ENCODE measurements at regions of chr7 and their contacts with region 1.

Region 1: GRCh38 chr7:6475433-6476186 is 27.9 kb upstream of the DAGLB start:
- DNase-seq: no peak
- ATAC-seq: no peak
- H3K4me3 ChIP-seq: no peak overlapping the region
- H3K4me3 Mint-ChIP-seq: no peak overlapping the region
- H3K27ac ChIP-seq: no peak overlapping the region
- H3K27ac Mint-ChIP-seq: peak overlapping the region in 7 of 9 donors; percentile 2 to 72 (median 21)
- H3K4me1 ChIP-seq: peaks cover 0 to 4% of the 10 kb centered on the region in 2 donors
- H3K4me1 Mint-ChIP-seq: peaks cover 42 to 62% (median 54%) of the 10 kb centered on the region in 7 donors
- H3K27me3 ChIP-seq: no peaks in the 10 kb centered on the region
- H3K27me3 Mint-ChIP-seq: no peaks in the 10 kb centered on the region

Region 2: DNA sequence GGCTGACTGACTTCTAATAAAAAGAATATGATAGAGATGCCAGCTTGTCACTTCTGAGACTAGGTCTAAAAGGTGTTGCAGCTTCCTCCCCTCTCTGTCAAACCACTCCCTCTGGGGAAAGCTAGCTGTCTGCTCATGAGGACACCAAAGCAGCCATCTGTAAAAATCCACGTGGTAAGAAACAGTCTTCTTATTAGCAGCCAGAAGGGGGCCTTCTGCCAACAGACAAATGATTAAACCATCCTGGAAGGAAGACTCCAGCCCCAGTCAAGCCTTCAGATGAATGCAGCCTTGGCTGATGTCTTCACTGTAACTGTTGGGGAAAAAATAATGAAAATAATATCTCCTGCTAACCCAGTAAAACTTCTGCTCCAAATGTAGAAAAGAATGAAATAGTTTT is 14.0 kb after region 1 on chr7:
- CTCF ChIA-PET with region 1: no interaction called
- POLR2A ChIA-PET with region 1: no interaction called
- intact Hi-C with region 1: loop called in 1 of 2 experiments (anchors 2 kb)
- DNase-seq: no peak
- ATAC-seq: no peak
- H3K4me3 ChIP-seq: no peak overlapping the region
- H3K4me3 Mint-ChIP-seq: no peak overlapping the region
- H3K27ac ChIP-seq: no peak overlapping the region
- H3K27ac Mint-ChIP-seq: no peak overlapping the region
- H3K4me1 ChIP-seq: peaks cover 0 to 3% of the 10 kb centered on the region in 2 donors
- H3K4me1 Mint-ChIP-seq: peaks cover 2 to 7% (median 3%) of the 10 kb centered on the region in 7 donors
- H3K27me3 ChIP-seq: no peaks in the 10 kb centered on the region
- H3K27me3 Mint-ChIP-seq: peaks cover 0 to 10% (median 0%) of the 10 kb centered on the region in 5 donors